Right cardiac atrium (tissue), 5 donors: ENCODE measurements at regions of chr9 and their contacts with region 1.

Region 1: DNA sequence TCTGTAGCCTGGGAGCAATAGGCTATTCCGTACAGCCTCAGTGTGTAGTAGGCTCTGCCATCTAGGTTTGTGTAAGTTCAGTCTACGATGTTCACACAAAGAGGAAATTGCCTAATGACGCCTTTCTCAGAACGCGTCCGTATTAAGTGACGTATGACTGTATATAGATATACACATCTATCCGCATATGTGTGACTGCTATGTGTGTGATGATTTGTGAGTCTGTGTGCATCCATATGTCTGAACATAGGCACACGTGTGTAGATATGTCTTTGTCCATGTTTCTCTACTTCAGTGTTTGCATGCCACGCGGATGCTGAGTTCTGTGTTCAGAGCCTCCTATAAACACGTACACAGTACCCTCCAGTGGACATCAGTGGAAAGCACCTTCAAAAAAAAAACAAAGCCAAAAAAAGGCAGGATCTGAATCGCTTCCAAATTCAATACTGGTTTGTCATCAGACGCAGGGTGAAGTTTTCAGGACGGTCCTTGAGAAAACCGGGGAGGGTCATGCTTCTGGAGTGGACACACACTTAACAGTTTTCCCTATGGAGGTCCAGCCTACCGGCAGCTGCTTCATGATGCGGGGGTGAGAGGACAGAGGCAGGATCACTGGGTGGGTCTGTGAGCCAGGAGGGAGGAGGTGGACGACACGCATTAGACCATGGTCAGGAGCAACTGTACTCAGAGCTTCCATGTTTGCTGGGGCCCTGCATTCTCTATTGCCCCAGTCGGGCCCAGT is 29.5 kb upstream of the ALDH1B1 start:
- DNase-seq: peak in 2 of 3 donors; percentile 31 to 69
- ATAC-seq: peak; percentile 82 to 86
- H3K4me3 ChIP-seq: no peak overlapping the region
- H3K27ac ChIP-seq: no peak overlapping the region
- H3K4me1 ChIP-seq: peaks cover 2% of the 10 kb centered on the region
- H3K27me3 ChIP-seq: no peaks in the 10 kb centered on the region

Region 2: GRCh38 chr9:37746848-37747753 is 615.9 kb before region 1 on chr9:
- intact Hi-C with region 1: loop called in 1 of 4 experiments (anchors 10 kb)
- DNase-seq: peak; percentile 39 to 75 (median 68)
- ATAC-seq: peak; percentile 66 to 71
- H3K4me3 ChIP-seq: no peak overlapping the region
- H3K27ac ChIP-seq: no peak overlapping the region
- H3K4me1 ChIP-seq: no peaks in the 10 kb centered on the region
- H3K27me3 ChIP-seq: no peaks in the 10 kb centered on the region

Region 3: DNA sequence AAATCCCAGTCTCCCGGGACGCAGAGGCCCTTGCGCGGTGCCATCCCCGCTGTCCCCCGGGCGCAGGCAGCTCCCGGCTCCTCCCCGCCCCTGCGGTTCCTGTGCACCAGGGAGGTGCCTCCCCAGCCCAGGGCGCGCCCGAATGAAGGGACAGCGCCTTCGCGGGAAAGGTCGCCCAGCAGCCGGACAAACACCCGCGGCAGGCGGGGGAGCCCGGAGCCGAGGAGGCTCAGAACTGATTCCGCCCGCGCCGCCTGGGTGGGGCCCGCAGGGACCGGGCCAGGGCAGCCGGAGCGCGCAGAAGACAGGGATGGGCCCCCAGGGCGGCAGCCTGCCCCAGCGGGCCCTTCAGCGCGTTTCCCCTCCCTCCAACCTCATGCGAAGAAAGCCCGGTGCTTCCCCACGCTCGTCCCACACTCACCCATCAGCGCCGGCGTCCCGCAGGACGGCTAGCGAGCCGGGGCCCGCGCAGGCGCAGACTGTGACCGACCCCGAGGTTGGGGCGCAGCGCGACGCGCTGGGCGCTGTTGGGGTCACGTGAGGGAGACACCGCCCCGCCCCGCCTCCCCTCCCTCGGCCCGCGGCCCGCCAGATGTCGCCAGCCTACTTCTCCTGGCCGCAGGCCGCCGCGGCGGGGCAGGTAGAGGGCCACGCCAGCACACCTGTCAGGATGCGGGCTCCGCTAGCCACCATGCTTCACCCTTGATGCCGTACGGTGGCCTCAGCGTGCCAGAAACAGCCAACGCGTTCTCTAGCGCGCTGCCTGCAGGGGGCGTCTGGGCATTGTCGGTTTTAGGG is 459.2 kb before region 1 on chr9 and contains the start of gene SLC25A51:
- intact Hi-C with region 1: loop called in 1 of 4 experiments (anchors 10 kb)
- DNase-seq: peak; percentile 92 to 98 (median 97)
- ATAC-seq: peak; percentile 94 to 95
- H3K4me3 ChIP-seq: peak within 1 kb of the TSS; percentile 83
- H3K27ac ChIP-seq: peak within 1 kb of the TSS; percentile 90
- H3K4me1 ChIP-seq: peaks cover 2% of the 10 kb centered on the region
- H3K27me3 ChIP-seq: no peaks in the 10 kb centered on the region
- total RNA-seq, gene SLC25A51: 21.1 to 29.4 (median 25.9) TPM

Region 4: DNA sequence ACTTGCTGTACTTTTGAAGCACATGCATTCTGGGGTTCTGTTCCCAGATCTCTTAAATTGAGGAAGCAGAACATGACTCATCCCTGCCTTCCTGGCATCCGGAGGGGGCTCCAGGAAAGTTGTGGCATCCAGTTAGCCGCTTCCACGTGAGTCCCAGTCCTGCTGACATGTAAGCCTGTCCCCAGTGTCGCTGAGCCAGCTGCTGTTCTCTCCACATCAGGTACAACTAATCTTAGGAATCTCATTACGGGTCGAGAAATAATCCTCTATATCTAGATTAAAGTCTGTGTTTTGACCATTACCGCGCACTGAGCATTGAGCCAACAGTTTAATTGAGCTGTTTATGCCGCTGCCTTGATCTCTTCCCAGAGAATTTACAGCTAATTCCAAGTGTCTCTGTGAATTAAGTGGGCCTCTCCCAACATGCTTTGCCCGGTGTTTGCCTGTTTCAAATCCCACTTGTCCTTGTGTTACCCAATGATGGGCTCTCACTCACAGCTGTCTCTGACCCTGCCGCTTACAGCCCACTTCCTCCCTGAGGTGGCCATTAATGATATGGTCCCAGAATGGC is 283.5 kb before region 1 on chr9:
- intact Hi-C with region 1: loop called in 3 of 4 experiments (anchors 5 to 10 kb)
- DNase-seq: peak in 1 of 3 donors; percentile 62
- ATAC-seq: no peak
- H3K4me3 ChIP-seq: no peak overlapping the region
- H3K27ac ChIP-seq: no peak overlapping the region
- H3K4me1 ChIP-seq: peaks cover 6% of the 10 kb centered on the region
- H3K27me3 ChIP-seq: no peaks in the 10 kb centered on the region

Region 5: DNA sequence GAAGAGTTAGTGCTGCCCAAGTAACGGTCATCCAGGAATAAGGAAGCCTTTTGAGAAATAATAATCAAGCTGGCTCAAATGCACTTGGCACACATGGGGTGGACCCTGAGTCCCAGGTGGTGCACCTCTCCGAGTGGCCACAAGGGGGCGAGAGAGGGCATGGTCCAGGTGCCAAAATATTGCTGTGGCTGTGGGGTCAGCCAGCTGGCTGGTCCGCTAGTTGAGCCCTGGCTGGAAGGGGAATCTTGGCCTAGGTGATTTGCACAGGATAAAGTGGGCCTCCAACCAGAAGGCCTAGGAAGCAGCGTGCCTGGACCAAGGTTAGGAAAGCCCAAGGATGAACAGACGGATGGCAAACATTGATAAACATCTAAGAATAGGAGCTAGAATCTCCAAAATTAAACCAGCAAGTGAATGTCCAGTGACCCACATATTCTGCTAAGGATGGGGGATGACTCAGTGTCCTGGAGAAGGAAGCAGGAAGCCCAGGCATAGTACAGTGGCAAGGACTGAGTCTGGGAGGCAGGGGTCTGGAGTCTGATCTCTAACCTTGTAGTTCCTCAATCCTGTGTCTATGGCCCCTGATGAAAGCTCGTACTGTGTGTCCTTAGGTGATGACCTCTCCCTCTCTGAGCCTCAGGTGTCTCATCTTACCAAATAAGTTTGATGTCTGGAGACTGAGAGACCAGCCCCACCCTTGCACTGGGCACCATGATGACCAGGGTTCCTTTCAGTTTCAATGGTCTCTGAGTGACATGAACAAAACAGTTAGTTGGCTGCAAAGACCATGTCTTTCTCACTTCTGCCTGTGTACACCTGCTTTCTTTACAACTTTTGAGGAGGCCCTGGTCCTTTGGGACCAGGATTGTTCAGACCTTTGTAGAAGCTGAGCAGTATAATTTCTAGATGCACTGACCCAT is 274.8 kb before region 1 on chr9:
- intact Hi-C with region 1: loop called in 3 of 4 experiments (anchors 5 to 10 kb)
- DNase-seq: peak; percentile 74 to 92 (median 89)
- ATAC-seq: peak; percentile 75 to 86
- H3K4me3 ChIP-seq: no peak overlapping the region
- H3K27ac ChIP-seq: no peak overlapping the region
- H3K4me1 ChIP-seq: peaks cover 6% of the 10 kb centered on the region
- H3K27me3 ChIP-seq: no peaks in the 10 kb centered on the region

Region 6: DNA sequence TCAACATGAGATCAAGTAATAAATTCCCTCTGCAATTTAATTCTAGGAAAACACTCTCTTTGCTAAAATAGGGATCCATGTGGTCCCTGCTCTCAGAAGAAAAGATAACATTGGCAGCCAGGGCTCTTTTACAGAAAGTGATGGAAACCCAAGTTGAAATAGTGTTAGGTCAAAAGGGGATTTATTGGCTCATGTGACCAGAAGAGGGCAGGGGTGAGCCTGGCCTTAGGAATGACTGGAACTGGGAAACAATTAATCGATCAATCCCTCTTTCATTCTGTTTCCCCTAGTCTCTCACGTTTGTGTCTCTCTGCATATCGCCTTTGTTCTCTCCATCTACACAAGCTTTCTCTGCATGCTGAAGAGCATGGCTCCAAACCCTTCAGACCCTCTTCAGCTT is 28.8 kb before region 1 on chr9:
- intact Hi-C with region 1: no loop called
- DNase-seq: no peak
- ATAC-seq: no peak
- H3K4me3 ChIP-seq: no peak overlapping the region
- H3K27ac ChIP-seq: no peak overlapping the region
- H3K4me1 ChIP-seq: no peaks in the 10 kb centered on the region
- H3K27me3 ChIP-seq: no peaks in the 10 kb centered on the region